ENCODE measurements at regions of chr19 and their contacts with region 1.

Region 1: GRCh38 chr19:49640113-49640898 is at the start of gene RRAS:
- DNase-seq: peak; percentile 94 to 100 (median 99)
- ATAC-seq: peak; percentile 67 to 73
- H3K4me3 Mint-ChIP-seq: peak within 1 kb of the TSS; percentile 87 to 98 (median 94)
- H3K27ac Mint-ChIP-seq: peak within 1 kb of the TSS; percentile 94 to 99 (median 97)
- H3K4me1 Mint-ChIP-seq: peaks cover 45 to 68% (median 58%) of the 10 kb centered on the region in 4 donors
- H3K27me3 Mint-ChIP-seq: no peaks in the 10 kb centered on the region
- polyA plus RNA-seq, gene RRAS: 21.8 to 30.2 (median 28.4) TPM

Region 2: GRCh38 chr19:48999481-49000325 is 640.6 kb before region 1 on chr19:
- POLR2A ChIA-PET with region 1: no interaction called
- DNase-seq: peak; percentile 38 to 77 (median 54)
- ATAC-seq: peak; percentile 87 to 89
- H3K4me3 Mint-ChIP-seq: no peak overlapping the region
- H3K27ac Mint-ChIP-seq: peak overlapping the region in 4 of 10 donors; percentile 0 to 70 (median 54)
- H3K4me1 Mint-ChIP-seq: peaks cover 8 to 30% (median 20%) of the 10 kb centered on the region in 4 donors
- H3K27me3 Mint-ChIP-seq: no peaks in the 10 kb centered on the region

Region 3: GRCh38 chr19:49497047-49497788 is 143.1 kb before region 1 on chr19:
- POLR2A ChIA-PET with region 1: interaction called, 10 read pairs
- DNase-seq: peak; percentile 51 to 87 (median 72)
- ATAC-seq: peak; percentile 3 to 5
- H3K4me3 Mint-ChIP-seq: peak overlapping the region; percentile 96 to 100 (median 100)
- H3K27ac Mint-ChIP-seq: peak overlapping the region; percentile 96 to 100 (median 99)
- H3K4me1 Mint-ChIP-seq: peaks cover 18 to 79% (median 66%) of the 10 kb centered on the region in 4 donors
- H3K27me3 Mint-ChIP-seq: peaks cover 0 to 2% (median 0%) of the 10 kb centered on the region in 5 donors

Region 4: GRCh38 chr19:49580264-49581006 is 59.9 kb before region 1 on chr19 and contains the start of gene NOSIP:
- POLR2A ChIA-PET with region 1: interaction called, 32 read pairs
- DNase-seq: peak; percentile 88 to 98 (median 96)
- ATAC-seq: peak; percentile 98 to 99
- H3K4me3 Mint-ChIP-seq: peak within 1 kb of the TSS; percentile 90 to 98 (median 94)
- H3K27ac Mint-ChIP-seq: peak within 1 kb of the TSS; percentile 89 to 97 (median 93)
- H3K4me1 Mint-ChIP-seq: peaks cover 14 to 44% (median 36%) of the 10 kb centered on the region in 4 donors
- H3K27me3 Mint-ChIP-seq: no peaks in the 10 kb centered on the region
- polyA plus RNA-seq, gene NOSIP: 662 to 854 (median 844) TPM

Region 5: DNA sequence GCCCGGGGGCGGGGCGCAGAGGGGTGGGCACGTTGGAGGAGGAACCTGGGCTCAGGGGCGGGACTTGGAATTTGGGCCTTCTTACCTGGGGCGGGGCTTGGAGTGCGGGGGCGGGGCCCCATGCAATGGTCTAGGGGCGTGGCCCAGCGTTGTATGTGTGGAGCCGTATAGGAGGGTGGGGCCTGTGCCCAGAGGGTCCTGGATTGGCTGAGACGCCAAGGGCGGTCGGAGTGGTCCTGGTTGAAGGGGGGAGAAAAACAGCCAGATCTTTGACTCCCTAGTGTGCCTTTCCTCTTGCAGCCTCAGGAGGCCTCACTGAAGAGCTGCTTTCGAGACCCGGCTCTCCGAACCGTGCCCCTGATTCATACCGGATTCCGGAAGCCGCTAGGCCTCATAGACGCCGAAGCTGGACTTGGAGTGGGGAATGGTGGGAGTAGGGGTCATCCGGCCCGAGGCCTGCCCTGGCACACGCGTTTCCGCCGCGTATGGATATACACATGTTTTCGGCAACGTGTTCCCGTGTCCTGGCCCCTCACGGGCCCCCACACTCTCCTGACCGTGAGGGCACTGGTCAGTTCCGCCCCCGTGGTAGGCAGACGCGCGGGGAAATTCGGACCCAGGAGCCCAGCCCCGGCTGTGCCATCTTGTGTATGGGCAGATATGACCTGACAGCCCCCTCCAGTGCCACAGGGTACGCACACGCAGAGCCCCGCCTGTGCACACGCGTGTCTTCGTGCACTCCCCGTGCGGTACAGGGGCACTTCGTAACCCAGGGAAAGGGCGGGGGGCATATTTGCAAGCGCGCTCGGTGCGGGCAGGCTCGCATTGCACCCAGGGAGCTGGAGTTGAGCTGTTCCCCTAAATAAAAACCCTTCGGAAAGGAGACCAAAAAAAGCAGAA is 50.0 kb before region 1 on chr19:
- POLR2A ChIA-PET with region 1: interaction called, 180 read pairs
- DNase-seq: peak; percentile 89 to 99 (median 98)
- ATAC-seq: peak; percentile 78 to 82
- H3K4me3 Mint-ChIP-seq: peak overlapping the region; percentile 86 to 97 (median 92)
- H3K27ac Mint-ChIP-seq: peak overlapping the region; percentile 34 to 97 (median 92)
- H3K4me1 Mint-ChIP-seq: peaks cover 22 to 46% (median 34%) of the 10 kb centered on the region in 4 donors
- H3K27me3 Mint-ChIP-seq: no peaks in the 10 kb centered on the region

Region 6: DNA sequence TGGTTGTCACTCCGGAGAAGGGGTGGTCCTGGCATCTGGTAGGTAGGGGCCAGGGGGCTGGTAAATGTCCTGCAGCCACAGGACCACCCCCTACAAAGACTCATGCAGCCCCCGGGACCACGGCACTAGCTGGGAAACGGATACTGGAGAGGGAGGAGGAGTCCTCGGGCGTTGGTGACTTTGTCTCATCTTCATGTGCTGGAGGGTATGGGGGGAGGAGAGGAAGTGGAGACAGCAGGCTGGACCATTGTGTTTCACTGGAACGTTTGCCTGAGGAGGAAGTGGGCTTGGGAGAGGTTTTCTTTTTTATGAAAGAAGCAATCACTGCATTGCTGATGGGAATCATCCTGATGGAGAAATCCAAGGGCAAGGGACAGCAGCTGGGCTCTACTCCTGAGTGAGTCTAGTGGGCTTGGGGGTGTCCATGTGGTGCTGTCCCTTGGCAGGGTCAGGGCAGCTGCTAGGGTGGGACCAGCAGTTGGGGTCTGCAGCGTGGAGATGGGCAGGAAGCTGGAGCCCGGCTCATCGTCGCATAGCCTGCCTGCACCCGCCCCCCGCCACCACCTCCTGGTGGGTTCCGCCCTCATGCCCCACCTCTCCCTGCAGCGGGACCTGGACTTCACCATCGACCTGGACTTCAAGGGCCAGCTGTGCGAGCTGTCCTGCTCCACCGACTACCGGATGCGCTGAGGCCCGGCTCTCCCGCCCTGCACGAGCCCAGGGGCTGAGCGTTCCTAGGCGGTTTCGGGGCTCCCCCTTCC is 47.4 kb after region 1 on chr19:
- POLR2A ChIA-PET with region 1: no interaction called
- DNase-seq: no peak
- ATAC-seq: no peak
- H3K4me3 Mint-ChIP-seq: no peak overlapping the region
- H3K27ac Mint-ChIP-seq: peak overlapping the region in 4 of 10 donors; percentile 11 to 71 (median 26)
- H3K4me1 Mint-ChIP-seq: peaks cover 16 to 33% (median 24%) of the 10 kb centered on the region in 4 donors
- H3K27me3 Mint-ChIP-seq: peaks cover 0 to 11% (median 11%) of the 10 kb centered on the region in 5 donors

Measured in naive thymus-derived CD8-positive, alpha-beta T cell (primary cell).